ENCODE measurements at regions of chr18 and their contacts with region 1.

Region 1: GRCh38 chr18:63339920-63340484 is 20.4 kb upstream of the BCL2 start:
- DNase-seq: peak; percentile 40
- H3K4me3 ChIP-seq: no peak overlapping the region
- H3K27ac ChIP-seq: no peak overlapping the region
- H3K4me1 ChIP-seq: no peaks in the 10 kb centered on the region
- H3K27me3 ChIP-seq: no peaks in the 10 kb centered on the region
- CTCF ChIP-seq: peak; percentile 46 to 49
- POLR2A ChIP-seq: no peak

Region 2: GRCh38 chr18:63016270-63016669 is 323.7 kb before region 1 on chr18:
- CTCF ChIA-PET with region 1: interaction called, 7 read pairs
- POLR2A ChIA-PET with region 1: interaction called, 3 read pairs
- dilution Hi-C with region 1: no loop called
- intact Hi-C with region 1: loop called (anchors 1 kb)
- DNase-seq: peak; percentile 39
- H3K4me3 ChIP-seq: no peak overlapping the region
- H3K27ac ChIP-seq: no peak overlapping the region
- H3K4me1 ChIP-seq: no peaks in the 10 kb centered on the region
- H3K27me3 ChIP-seq: peaks cover 18 to 21% of the 10 kb centered on the region in 2 experiments
- CTCF ChIP-seq: peak; percentile 71 to 75
- POLR2A ChIP-seq: no peak

Region 3: DNA sequence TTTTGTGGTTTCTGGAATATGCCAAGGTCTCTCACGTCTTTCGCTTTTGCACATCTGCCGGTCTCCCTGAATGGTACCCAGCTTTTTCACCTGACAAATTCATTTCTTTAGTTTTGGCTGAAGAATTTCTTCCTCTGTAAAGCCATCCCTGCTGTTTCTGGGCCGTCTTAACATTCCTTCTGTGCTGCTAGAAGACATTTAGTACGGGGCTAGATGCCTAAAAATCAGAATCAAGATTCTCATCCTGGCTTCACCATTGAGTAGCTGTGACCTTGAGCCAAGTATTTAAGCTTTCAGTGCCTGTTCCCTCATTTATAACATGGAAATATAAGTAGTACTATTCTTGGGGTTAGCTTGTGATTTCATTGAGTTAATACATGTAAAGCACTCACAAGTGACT is 14.0 kb before region 1 on chr18:
- CTCF ChIA-PET with region 1: interaction called, 13 read pairs
- POLR2A ChIA-PET with region 1: no interaction called
- dilution Hi-C with region 1: no loop called
- intact Hi-C with region 1: no loop called
- DNase-seq: no peak
- H3K4me3 ChIP-seq: no peak overlapping the region
- H3K27ac ChIP-seq: no peak overlapping the region
- H3K4me1 ChIP-seq: peaks cover 7% of the 10 kb centered on the region
- H3K27me3 ChIP-seq: no peaks in the 10 kb centered on the region
- CTCF ChIP-seq: no peak
- POLR2A ChIP-seq: no peak

Region 4: GRCh38 chr18:63451799-63452660 is 112.0 kb after region 1 on chr18:
- CTCF ChIA-PET with region 1: no interaction called
- POLR2A ChIA-PET with region 1: no interaction called
- dilution Hi-C with region 1: no loop called
- intact Hi-C with region 1: no loop called
- DNase-seq: peak; percentile 32
- H3K4me3 ChIP-seq: no peak overlapping the region
- H3K27ac ChIP-seq: no peak overlapping the region
- H3K4me1 ChIP-seq: no peaks in the 10 kb centered on the region
- H3K27me3 ChIP-seq: no peaks in the 10 kb centered on the region
- CTCF ChIP-seq: no peak
- POLR2A ChIP-seq: no peak

Region 5: GRCh38 chr18:63969960-63970802 is 630.2 kb after region 1 on chr18 and contains the start of gene SERPINB8:
- CTCF ChIA-PET with region 1: no interaction called
- POLR2A ChIA-PET with region 1: no interaction called
- dilution Hi-C with region 1: no loop called
- intact Hi-C with region 1: no loop called
- DNase-seq: peak; percentile 86
- H3K4me3 ChIP-seq: peak within 1 kb of the TSS; percentile 60 to 94 (median 63)
- H3K27ac ChIP-seq: peak within 1 kb of the TSS; percentile 99
- H3K4me1 ChIP-seq: peaks cover 14% of the 10 kb centered on the region
- H3K27me3 ChIP-seq: no peaks in the 10 kb centered on the region
- CTCF ChIP-seq: no peak
- POLR2A ChIP-seq: peak; percentile 82
- total RNA-seq, gene SERPINB8: 24.1 and 25.7 TPM in 2 replicates